Calu3 (cell line): ENCODE measurements at regions of chr9 and their contacts with region 1.

Region 1: DNA sequence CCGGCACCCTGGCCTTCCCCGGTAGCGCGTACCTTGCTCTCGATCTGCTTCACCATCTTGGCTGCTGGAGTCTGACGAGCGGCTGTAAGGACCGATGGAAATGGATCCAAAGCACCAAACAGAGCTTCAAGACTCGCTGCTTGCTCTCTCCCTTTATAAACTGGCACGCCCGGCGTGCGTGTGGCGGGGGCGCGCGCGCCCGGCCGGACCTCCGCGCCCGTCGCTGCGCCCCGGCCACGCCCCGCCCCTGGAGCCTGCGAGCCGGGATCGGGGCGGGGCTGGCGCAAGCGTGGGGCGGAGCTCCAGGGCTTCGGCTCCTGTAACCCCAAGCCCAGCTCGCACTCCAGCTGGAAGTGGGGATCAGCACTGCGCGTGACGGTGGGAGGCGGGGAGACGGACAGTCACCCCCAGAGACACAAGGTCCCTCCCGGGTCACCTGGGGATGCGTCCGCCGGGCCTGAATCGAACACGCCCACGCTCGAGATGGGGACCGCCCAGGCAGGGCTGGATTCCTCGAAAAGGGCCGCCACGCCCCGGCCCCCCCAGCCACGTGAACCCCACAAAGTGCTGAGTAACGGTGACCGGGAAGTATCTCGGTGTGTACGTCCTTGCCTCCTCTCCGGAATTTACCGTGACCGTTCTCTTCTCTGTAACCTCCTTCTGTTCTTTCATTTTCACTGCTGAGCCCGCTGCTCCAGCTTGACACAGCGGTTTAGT is at the start of gene TXN:
- DNase-seq: peak; percentile 89
- H3K4me3 Mint-ChIP-seq: peak within 1 kb of the TSS; percentile 96
- H3K27ac Mint-ChIP-seq: peak within 1 kb of the TSS; percentile 99
- H3K4me1 Mint-ChIP-seq: peaks cover 47% of the 10 kb centered on the region
- H3K27me3 Mint-ChIP-seq: no peaks in the 10 kb centered on the region
- CTCF ChIP-seq: no peak
- total RNA-seq, gene TXN: 278 and 286 TPM in 2 replicates

Region 2: GRCh38 chr9:110278080-110278707 is 21.7 kb after region 1 on chr9:
- CTCF ChIA-PET with region 1: interaction called, 4 read pairs
- intact Hi-C with region 1: loop called (anchors 2 kb)
- DNase-seq: no peak
- H3K4me3 Mint-ChIP-seq: no peak overlapping the region
- H3K27ac Mint-ChIP-seq: no peak overlapping the region
- H3K4me1 Mint-ChIP-seq: peaks cover 40% of the 10 kb centered on the region
- H3K27me3 Mint-ChIP-seq: no peaks in the 10 kb centered on the region
- CTCF ChIP-seq: no peak

Region 3: GRCh38 chr9:110427497-110428104 is 171.1 kb after region 1 on chr9:
- CTCF ChIA-PET with region 1: no interaction called
- intact Hi-C with region 1: loop called (anchors 10 kb)
- DNase-seq: peak; percentile 56
- H3K4me3 Mint-ChIP-seq: no peak overlapping the region
- H3K27ac Mint-ChIP-seq: no peak overlapping the region
- H3K4me1 Mint-ChIP-seq: no peaks in the 10 kb centered on the region
- H3K27me3 Mint-ChIP-seq: no peaks in the 10 kb centered on the region
- CTCF ChIP-seq: peak; percentile 21